ENCODE measurements at regions of chr18 and their contacts with region 1.

Region 1: GRCh38 chr18:3451183-3451988 is 1.4 kb downstream of the TGIF1 start:
- DNase-seq: peak; percentile 97
- ATAC-seq: peak; percentile 62

Region 2: DNA sequence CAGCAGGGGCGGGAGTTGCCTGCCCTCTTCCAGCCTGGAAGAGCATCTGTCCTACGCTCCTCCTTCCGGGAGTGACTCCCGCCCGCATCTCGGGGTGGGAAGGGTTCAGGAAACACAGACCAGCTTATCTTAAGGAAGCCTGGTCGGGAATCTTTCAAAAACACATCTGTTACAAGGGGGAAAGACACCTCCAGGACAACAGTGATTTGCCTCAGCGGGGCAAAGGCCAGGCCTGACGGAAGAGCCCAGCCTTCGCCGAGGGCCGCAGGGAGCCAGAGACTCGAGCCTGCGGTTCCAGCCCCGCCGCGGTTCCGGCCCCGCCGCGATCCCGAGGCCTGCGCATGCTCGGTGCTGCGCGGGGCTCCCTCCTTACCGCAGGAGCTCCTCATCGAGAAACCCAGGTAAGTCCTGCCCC is 39.5 kb before region 1 on chr18:
- intact Hi-C with region 1: no loop called
- DNase-seq: peak; percentile 65
- ATAC-seq: peak; percentile 83

Region 3: DNA sequence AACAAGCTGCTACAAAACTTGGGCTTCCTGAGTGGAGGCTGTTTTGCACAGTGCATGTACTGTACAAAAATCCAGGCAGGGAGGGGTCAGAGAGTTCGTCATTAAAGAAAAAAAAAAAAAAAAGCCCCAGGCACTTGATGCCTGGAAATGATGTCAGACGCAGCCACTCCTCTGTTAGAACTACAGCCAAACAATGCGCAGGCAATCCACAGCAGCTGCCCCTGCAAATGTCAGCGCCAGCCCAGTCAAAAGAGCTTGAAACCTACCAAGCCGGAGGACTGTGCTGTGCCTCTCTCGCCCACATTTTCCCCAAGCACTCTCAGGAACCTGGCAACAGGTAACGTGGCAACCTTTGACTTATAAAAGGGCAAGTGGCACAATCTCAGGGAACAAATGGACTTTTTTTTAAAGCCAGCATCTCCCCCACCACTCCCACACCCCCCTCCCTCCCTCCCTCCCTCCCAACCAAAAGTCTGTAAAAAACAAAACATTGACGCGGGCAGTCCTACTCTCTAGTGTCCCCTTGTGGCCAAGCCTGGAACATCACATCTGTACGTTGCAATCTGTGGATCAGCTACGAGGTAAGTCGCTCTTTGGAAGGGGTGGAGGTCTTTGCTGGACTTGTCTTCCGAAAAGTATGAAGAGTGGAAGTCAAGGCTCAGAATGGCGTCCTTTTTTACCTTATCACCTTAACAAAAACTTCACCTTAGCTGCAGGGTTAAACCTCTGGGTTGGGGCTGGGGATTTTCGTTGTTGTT is 142.7 kb after region 1 on chr18:
- intact Hi-C with region 1: loop called (anchors 5 kb)
- DNase-seq: peak; percentile 83
- ATAC-seq: peak; percentile 85

Region 4: GRCh38 chr18:3758531-3758930 is 307.1 kb after region 1 on chr18:
- intact Hi-C with region 1: no loop called
- DNase-seq: no peak
- ATAC-seq: no peak

Region 5: DNA sequence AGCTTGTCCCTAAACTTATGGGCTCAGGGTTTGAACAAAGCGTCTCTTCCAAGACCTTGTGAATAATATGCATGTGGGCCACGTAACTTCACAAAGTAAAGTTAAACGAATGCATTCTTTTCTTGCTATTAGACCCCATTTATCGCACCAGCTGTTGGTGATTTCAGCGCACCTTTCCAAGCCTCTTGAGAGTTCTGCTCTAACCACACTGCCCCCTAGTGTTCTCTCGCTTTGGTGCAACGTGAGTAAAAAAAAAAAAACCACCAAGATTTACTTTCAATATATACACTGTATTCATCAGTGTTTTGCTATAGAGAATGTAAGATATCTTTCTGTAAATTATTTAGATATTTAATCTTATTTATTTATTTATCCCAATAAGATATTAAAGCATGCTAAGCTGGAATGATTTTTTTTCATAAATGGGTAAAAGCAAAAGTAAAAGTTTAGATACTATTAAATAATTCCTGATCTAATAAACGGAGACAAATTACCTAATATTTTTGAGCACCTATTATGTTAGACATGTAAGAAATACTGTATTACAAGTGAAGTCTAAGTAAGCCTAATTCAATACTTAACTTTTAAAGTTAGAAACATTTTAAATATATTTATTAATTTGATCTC is 544.2 kb after region 1 on chr18:
- intact Hi-C with region 1: no loop called
- DNase-seq: no peak
- ATAC-seq: peak; percentile 51